ENCODE measurements at regions of chr11 and their contacts with region 1.

Region 1: GRCh38 chr11:128552783-128553661 is 34.3 kb downstream of the ETS1 start:
- DNase-seq: no peak
- H3K4me3 Mint-ChIP-seq: peak overlapping the region; percentile 0
- H3K27ac Mint-ChIP-seq: peak overlapping the region; percentile 53
- H3K4me1 Mint-ChIP-seq: peaks cover 60% of the 10 kb centered on the region
- H3K27me3 Mint-ChIP-seq: no peaks in the 10 kb centered on the region

Region 2: GRCh38 chr11:128563942-128564641 is 11.1 kb after region 1 on chr11:
- intact Hi-C with region 1: no loop called
- DNase-seq: no peak
- H3K4me3 Mint-ChIP-seq: no peak overlapping the region
- H3K27ac Mint-ChIP-seq: no peak overlapping the region
- H3K4me1 Mint-ChIP-seq: peaks cover 32% of the 10 kb centered on the region
- H3K27me3 Mint-ChIP-seq: peaks cover 3% of the 10 kb centered on the region

Region 3: DNA sequence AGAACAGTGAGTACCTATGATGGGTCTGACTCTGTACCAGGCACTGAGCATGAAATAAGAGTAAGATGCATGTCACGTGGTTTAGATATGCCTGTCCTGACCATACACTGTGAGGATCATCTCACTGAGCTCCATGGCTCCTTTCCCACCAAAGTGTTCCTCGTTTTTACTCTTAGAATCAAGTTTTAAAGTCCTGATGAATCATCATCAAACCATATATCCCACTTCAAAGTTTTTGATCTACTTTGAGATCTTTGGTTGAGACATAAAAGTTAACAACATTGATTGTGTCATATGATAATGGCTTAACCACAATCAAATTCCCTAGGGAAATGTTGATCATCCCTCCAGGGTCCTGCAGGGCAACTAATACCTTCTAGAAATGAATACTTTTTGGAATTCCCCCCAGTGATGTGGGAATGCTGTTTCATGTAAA is 21.6 kb after region 1 on chr11:
- intact Hi-C with region 1: loop called (anchors 1 kb)
- DNase-seq: no peak
- H3K4me3 Mint-ChIP-seq: no peak overlapping the region
- H3K27ac Mint-ChIP-seq: no peak overlapping the region
- H3K4me1 Mint-ChIP-seq: peaks cover 38% of the 10 kb centered on the region
- H3K27me3 Mint-ChIP-seq: no peaks in the 10 kb centered on the region

Measured in activated T-helper 1 cell treated with anti-CD3 and anti-CD28 coated beads, Interleukin-12 subunit alpha, Interleukin-12 subunit beta, Interleukin-2, Interleukin-4 antibody, amounts not matched to agents 30 ng/mL and 10 ng/mL and 1 ng/mL, durations not matched to agents 14 hours and 24 hours and 36 hours (primary cell).